Activated CD4-positive, alpha-beta memory T cell treated with anti-CD3 and anti-CD28 coated beads for 36 hours (primary cell): ENCODE measurements at regions of chr11 and their contacts with region 1.

Region 1: GRCh38 chr11:86202013-86202336 is 42.6 kb upstream of the EED start:
- DNase-seq: peak; percentile 38
- H3K4me3 Mint-ChIP-seq: no peak overlapping the region
- H3K27ac Mint-ChIP-seq: no peak overlapping the region
- H3K4me1 Mint-ChIP-seq: peaks cover 5% of the 10 kb centered on the region
- H3K27me3 Mint-ChIP-seq: no peaks in the 10 kb centered on the region

Region 2: DNA sequence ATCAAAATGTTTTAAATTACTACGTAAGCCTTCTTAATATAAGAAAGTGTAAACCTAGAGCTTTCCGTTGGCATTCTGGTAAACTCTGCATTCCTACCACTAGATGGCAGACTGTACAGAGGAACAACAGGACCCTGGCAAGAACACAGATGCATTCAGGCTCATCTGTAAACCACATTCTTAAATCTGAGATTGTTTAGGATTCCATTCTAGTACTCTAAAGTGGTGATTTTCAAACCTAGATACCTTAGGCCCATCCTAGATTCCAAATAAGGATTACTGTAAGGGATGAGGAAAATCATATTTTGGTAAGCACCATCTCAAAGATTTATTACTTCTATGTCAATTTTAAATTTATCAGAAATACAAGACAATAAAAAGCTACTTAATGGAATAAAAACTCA is 160.0 kb before region 1 on chr11:
- CTCF ChIA-PET with region 1: interaction called, 12 read pairs
- POLR2A ChIA-PET with region 1: interaction called, 3 read pairs
- intact Hi-C with region 1: loop called (anchors 1 kb)
- DNase-seq: peak; percentile 48
- H3K4me3 Mint-ChIP-seq: no peak overlapping the region
- H3K27ac Mint-ChIP-seq: peak overlapping the region; percentile 58
- H3K4me1 Mint-ChIP-seq: peaks cover 71% of the 10 kb centered on the region
- H3K27me3 Mint-ChIP-seq: no peaks in the 10 kb centered on the region

Region 3: GRCh38 chr11:86230921-86231430 is 29.0 kb after region 1 on chr11:
- CTCF ChIA-PET with region 1: interaction called, 3 read pairs
- POLR2A ChIA-PET with region 1: interaction called, 3 read pairs
- intact Hi-C with region 1: loop called (anchors 1 kb)
- DNase-seq: no peak
- H3K4me3 Mint-ChIP-seq: no peak overlapping the region
- H3K27ac Mint-ChIP-seq: peak overlapping the region; percentile 77
- H3K4me1 Mint-ChIP-seq: peaks cover 66% of the 10 kb centered on the region
- H3K27me3 Mint-ChIP-seq: no peaks in the 10 kb centered on the region

Region 4: GRCh38 chr11:86244522-86245368 is 42.8 kb after region 1 on chr11 and contains the start of gene EED:
- CTCF ChIA-PET with region 1: no interaction called
- POLR2A ChIA-PET with region 1: no interaction called
- intact Hi-C with region 1: no loop called
- DNase-seq: peak; percentile 96
- H3K4me3 Mint-ChIP-seq: no peak within 1 kb of the TSS
- H3K27ac Mint-ChIP-seq: no peak within 1 kb of the TSS
- H3K4me1 Mint-ChIP-seq: peaks cover 33% of the 10 kb centered on the region
- H3K27me3 Mint-ChIP-seq: no peaks in the 10 kb centered on the region
- total RNA-seq, gene EED: 170 TPM